B cell (primary cell): ENCODE measurements at regions of chr4 and their contacts with region 1.

Region 1: DNA sequence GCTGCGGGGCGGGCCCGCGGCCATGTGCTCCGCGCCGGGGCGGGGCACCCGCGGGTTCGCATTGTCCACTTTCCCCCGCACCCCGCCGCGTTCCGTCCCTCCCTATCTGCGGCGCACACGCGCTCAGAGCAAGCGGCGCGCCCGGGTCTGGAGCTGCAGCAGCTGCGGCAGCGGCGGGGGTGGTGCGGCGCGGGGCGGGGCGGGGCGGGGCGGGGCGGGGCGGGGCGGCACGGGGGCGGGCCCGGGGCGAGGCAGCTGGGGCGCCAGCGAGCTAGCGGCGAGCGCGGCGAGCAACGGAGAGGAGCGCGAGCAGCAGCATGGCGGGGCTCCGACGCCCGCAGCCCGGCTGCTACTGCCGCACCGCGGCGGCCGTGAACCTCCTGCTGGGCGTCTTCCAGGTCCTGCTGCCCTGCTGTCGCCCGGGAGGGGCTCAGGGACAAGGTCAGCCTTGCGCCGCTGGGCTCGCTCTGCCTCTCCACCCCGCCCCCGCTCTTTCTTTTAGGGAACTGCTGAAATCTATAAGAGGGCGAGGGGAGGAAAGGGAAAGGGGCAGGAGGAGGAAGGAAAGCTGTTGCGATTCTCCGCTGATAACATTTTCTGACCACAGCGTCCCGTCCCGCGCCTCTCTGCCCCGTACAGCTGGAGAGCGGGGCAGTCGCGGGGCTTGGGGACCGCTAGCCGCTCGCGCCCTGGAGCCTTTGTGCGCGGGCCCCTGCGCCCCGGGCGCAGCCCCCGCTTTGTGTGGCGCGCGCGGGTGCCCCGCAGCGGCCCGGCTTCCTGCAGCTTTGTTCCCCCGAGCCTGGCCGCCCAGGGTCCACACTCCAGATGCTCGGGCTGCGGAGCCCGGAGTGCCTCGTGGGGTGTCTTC is at the start of gene TMEM131L:
- DNase-seq: peak; percentile 90
- ATAC-seq: peak; percentile 51
- H3K4me3 ChIP-seq: peak within 1 kb of the TSS; percentile 62 to 98 (median 94)
- H3K4me3 Mint-ChIP-seq: peak within 1 kb of the TSS; percentile 94
- H3K27ac ChIP-seq: peak within 1 kb of the TSS; percentile 83 to 99
- H3K27ac Mint-ChIP-seq: peak within 1 kb of the TSS; percentile 96
- H3K4me1 ChIP-seq: peaks cover 37 to 44% of the 10 kb centered on the region in 2 donors
- H3K4me1 Mint-ChIP-seq: peaks cover 55% of the 10 kb centered on the region
- H3K27me3 ChIP-seq: no peaks in the 10 kb centered on the region
- H3K27me3 Mint-ChIP-seq: no peaks in the 10 kb centered on the region
- CTCF ChIP-seq: peak; percentile 17
- total RNA-seq, gene TMEM131L: 120 and 123 TPM in 2 replicates

Region 2: GRCh38 chr4:153344131-153345010 is 121.9 kb before region 1 on chr4 and contains the start of gene MND1:
- CTCF ChIA-PET with region 1: interaction called, 19 read pairs
- POLR2A ChIA-PET with region 1: no interaction called
- intact Hi-C with region 1: loop called (anchors 2 kb)
- DNase-seq: peak; percentile 90
- ATAC-seq: peak; percentile 92
- H3K4me3 ChIP-seq: peak within 1 kb of the TSS; percentile 62 to 90 (median 74)
- H3K4me3 Mint-ChIP-seq: peak within 1 kb of the TSS; percentile 95
- H3K27ac ChIP-seq: no peak within 1 kb of the TSS
- H3K27ac Mint-ChIP-seq: peak within 1 kb of the TSS; percentile 33
- H3K4me1 ChIP-seq: peaks cover 25% of the 10 kb centered on the region in 2 donors
- H3K4me1 Mint-ChIP-seq: peaks cover 42% of the 10 kb centered on the region
- H3K27me3 ChIP-seq: no peaks in the 10 kb centered on the region
- H3K27me3 Mint-ChIP-seq: no peaks in the 10 kb centered on the region
- CTCF ChIP-seq: peak; percentile 98
- total RNA-seq, gene MND1: not detected in 2 replicates

Region 3: DNA sequence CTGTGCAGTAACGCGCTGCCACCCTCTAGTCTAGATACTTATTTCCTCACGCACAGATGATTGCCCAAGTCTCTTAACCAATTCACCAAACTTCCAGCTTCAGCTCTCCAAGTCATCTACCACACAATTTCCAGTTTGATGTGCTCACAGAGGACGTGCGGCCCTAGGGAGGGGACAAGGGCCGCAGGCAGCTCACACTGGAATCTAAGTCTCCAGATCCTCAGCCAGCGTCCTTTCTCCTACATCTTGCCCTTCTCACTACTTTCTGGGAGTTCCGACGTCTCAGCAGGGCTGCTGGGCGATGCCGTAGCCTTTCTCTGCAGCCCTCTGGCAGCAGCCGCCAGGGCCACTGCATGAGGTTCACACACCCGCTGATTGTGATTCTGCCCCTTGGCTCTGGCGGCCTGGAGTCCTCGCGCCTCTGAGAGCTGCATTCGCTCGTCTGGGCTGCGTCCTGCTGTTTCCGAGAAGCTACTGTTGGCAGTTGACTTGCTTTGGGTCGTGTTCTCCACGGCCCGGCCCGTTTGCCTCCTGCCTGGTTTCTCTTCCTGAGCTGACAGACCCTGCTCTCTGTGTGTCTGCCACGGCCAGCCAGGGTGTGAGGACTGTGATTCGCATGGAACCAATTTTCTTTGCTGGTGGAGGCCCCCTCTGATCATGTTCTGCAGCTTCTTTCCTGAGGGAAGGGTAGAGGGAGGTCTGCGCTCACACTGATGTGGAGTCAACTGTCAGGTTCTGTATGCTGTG is 14.2 kb before region 1 on chr4:
- CTCF ChIA-PET with region 1: interaction called, 6 read pairs
- POLR2A ChIA-PET with region 1: interaction called, 3 read pairs
- intact Hi-C with region 1: loop called (anchors 2 kb)
- DNase-seq: no peak
- ATAC-seq: no peak
- H3K4me3 ChIP-seq: no peak overlapping the region
- H3K4me3 Mint-ChIP-seq: no peak overlapping the region
- H3K27ac ChIP-seq: no peak overlapping the region
- H3K27ac Mint-ChIP-seq: peak overlapping the region; percentile 69
- H3K4me1 ChIP-seq: peaks cover 15 to 20% of the 10 kb centered on the region in 2 donors
- H3K4me1 Mint-ChIP-seq: peaks cover 27% of the 10 kb centered on the region
- H3K27me3 ChIP-seq: no peaks in the 10 kb centered on the region
- H3K27me3 Mint-ChIP-seq: no peaks in the 10 kb centered on the region
- CTCF ChIP-seq: no peak

Region 4: GRCh38 chr4:153497988-153498967 is 32.0 kb after region 1 on chr4:
- CTCF ChIA-PET with region 1: interaction called, 11 read pairs
- POLR2A ChIA-PET with region 1: interaction called, 6 read pairs
- intact Hi-C with region 1: no loop called
- DNase-seq: peak; percentile 62
- ATAC-seq: peak; percentile 82
- H3K4me3 ChIP-seq: peak overlapping the region in 2 of 5 experiments; percentile 18 to 30
- H3K4me3 Mint-ChIP-seq: peak overlapping the region; percentile 75
- H3K27ac ChIP-seq: peak overlapping the region; percentile 7 to 98
- H3K27ac Mint-ChIP-seq: peak overlapping the region; percentile 85
- H3K4me1 ChIP-seq: peaks cover 80 to 83% of the 10 kb centered on the region in 2 donors
- H3K4me1 Mint-ChIP-seq: peaks cover 91% of the 10 kb centered on the region
- H3K27me3 ChIP-seq: no peaks in the 10 kb centered on the region
- H3K27me3 Mint-ChIP-seq: no peaks in the 10 kb centered on the region
- CTCF ChIP-seq: no peak